ENCODE measurements at regions of chr4 and their contacts with region 1.

Region 1: DNA sequence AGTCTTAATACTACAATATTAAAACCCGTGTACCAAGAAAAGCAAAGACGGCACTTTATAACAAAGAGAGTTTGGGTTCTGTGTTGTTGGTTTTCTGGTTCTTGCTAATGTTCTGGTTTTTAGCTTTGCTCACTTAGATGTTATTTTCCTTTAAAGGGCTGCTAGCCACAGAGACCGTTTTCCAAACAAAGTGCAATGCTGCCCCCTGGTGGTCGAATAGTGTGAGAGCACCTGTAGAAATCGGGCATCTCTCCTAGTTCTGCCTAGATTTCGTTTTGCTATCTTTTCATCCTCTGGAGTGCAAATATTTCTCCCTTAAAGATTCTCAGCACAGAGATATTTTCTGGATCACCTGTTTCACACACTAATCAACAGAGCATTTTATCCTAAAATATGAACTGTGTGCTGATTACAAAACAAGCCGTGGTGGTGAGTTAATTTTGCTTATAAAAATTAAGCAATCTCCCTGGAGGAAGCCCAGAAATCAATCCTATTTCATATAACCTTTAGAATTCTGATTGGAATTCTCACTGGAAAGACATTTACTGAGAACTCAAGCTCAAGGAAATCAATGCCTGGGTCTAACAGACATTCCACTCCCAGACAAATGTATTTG is 334.5 kb upstream of the NOCT start:
- DNase-seq: peak in 4 of 5 donors; percentile 32 to 43 (median 42)
- H3K4me3 ChIP-seq: no peak overlapping the region
- H3K4me3 Mint-ChIP-seq: no peak overlapping the region
- H3K27ac ChIP-seq: no peak overlapping the region
- H3K27ac Mint-ChIP-seq: no peak overlapping the region
- H3K4me1 ChIP-seq: no peaks in the 10 kb centered on the region
- H3K4me1 Mint-ChIP-seq: no peaks in the 10 kb centered on the region
- H3K27me3 ChIP-seq: no peaks in the 10 kb centered on the region
- H3K27me3 Mint-ChIP-seq: peaks cover 8 to 9% of the 10 kb centered on the region in 2 donors

Region 2: GRCh38 chr4:138669479-138670315 is 11.4 kb before region 1 on chr4:
- CTCF ChIA-PET with region 1: interaction called, 14 read pairs
- POLR2A ChIA-PET with region 1: no interaction called
- intact Hi-C with region 1: no loop called
- DNase-seq: no peak
- H3K4me3 ChIP-seq: no peak overlapping the region
- H3K4me3 Mint-ChIP-seq: no peak overlapping the region
- H3K27ac ChIP-seq: no peak overlapping the region
- H3K27ac Mint-ChIP-seq: no peak overlapping the region
- H3K4me1 ChIP-seq: no peaks in the 10 kb centered on the region
- H3K4me1 Mint-ChIP-seq: no peaks in the 10 kb centered on the region
- H3K27me3 ChIP-seq: no peaks in the 10 kb centered on the region
- H3K27me3 Mint-ChIP-seq: peaks cover 0 to 4% of the 10 kb centered on the region in 2 donors

Region 3: DNA sequence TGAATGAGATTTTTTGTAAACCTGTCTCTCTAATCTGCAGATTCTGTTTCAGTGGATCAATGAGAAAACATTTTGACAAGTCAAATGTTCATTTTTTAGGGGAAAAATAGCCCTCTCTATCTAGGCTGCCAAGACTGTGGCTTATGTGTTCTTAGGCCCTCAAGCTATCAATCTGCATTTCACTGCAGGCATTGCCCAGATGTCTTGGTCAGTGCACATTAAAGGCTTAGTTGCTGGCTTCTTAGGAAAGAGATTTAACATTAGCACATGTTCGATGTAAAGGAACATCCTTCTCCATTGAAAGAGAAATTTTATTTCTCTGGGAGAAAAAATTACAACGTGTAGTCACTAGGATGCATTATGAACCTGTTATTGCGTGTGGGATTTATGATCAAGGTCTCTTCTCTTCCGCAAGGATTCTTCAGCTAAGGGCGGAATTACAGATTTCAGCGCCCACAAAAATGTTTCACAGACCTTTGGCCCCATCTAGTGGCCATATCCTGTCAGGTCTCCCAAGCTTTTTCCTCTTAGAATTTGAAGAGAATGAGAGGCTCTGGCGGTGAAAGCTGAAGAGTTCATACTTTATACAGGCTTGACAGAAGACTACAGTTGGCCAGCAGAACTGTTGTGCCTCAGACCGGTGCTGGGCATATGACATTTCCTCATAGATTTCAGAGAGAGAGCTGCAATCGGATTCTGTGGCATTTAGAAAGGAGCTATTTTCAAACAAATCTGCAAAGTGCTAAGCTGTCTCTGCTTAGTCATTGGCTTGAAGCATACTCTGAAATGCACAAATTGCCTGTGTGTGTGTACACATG is 189.8 kb after region 1 on chr4:
- CTCF ChIA-PET with region 1: interaction called, 8 read pairs
- POLR2A ChIA-PET with region 1: no interaction called
- intact Hi-C with region 1: loop called (anchors 1 kb)
- DNase-seq: peak in 4 of 5 donors; percentile 20 to 27 (median 25)
- H3K4me3 ChIP-seq: no peak overlapping the region
- H3K4me3 Mint-ChIP-seq: no peak overlapping the region
- H3K27ac ChIP-seq: no peak overlapping the region
- H3K27ac Mint-ChIP-seq: no peak overlapping the region
- H3K4me1 ChIP-seq: no peaks in the 10 kb centered on the region
- H3K4me1 Mint-ChIP-seq: peaks cover 0 to 5% (median under 1%) of the 10 kb centered on the region in 4 donors
- H3K27me3 ChIP-seq: no peaks in the 10 kb centered on the region
- H3K27me3 Mint-ChIP-seq: peaks cover 5 to 16% of the 10 kb centered on the region in 2 donors